Psoas muscle (tissue), 8 donors: ENCODE measurements at regions of chr5 and their contacts with region 1.

Region 1: GRCh38 chr5:140372971-140373487 is 13.0 kb downstream of the SLC4A9 start:
- DNase-seq: peak; percentile 75 to 83
- ATAC-seq: peak; percentile 80 to 93 (median 86)
- H3K4me3 ChIP-seq: no peak overlapping the region
- H3K27ac ChIP-seq: no peak overlapping the region
- H3K4me1 ChIP-seq: no peaks in the 10 kb centered on the region
- H3K27me3 ChIP-seq: no peaks in the 10 kb centered on the region
- CTCF ChIP-seq: peak; percentile 83

Region 2: GRCh38 chr5:139104577-139105276 is 1268.3 kb before region 1 on chr5:
- intact Hi-C with region 1: no loop called
- DNase-seq: peak; percentile 71 to 83
- ATAC-seq: peak; percentile 90 to 91 (median 90)
- H3K4me3 ChIP-seq: peak overlapping the region; percentile 48
- H3K27ac ChIP-seq: peak overlapping the region; percentile 73
- H3K4me1 ChIP-seq: peaks cover 42% of the 10 kb centered on the region
- H3K27me3 ChIP-seq: no peaks in the 10 kb centered on the region
- CTCF ChIP-seq: no peak

Region 3: GRCh38 chr5:140408750-140409256 is 35.8 kb after region 1 on chr5:
- intact Hi-C with region 1: no loop called
- DNase-seq: no peak
- ATAC-seq: peak; percentile 18 to 68 (median 50)
- H3K4me3 ChIP-seq: no peak overlapping the region
- H3K27ac ChIP-seq: peak overlapping the region; percentile 46
- H3K4me1 ChIP-seq: peaks cover 26% of the 10 kb centered on the region
- H3K27me3 ChIP-seq: no peaks in the 10 kb centered on the region
- CTCF ChIP-seq: no peak

Region 4: GRCh38 chr5:140432916-140433315 is 59.9 kb after region 1 on chr5:
- intact Hi-C with region 1: no loop called
- DNase-seq: no peak
- ATAC-seq: peak in 2 of 4 donors; percentile 77 to 80
- H3K4me3 ChIP-seq: no peak overlapping the region
- H3K27ac ChIP-seq: peak overlapping the region; percentile 30
- H3K4me1 ChIP-seq: peaks cover 12% of the 10 kb centered on the region
- H3K27me3 ChIP-seq: no peaks in the 10 kb centered on the region
- CTCF ChIP-seq: no peak

Region 5: GRCh38 chr5:140639148-140639979 is 266.3 kb after region 1 on chr5 and contains the start of gene TMCO6:
- intact Hi-C with region 1: loop called in 1 of 2 experiments (anchors 5 kb)
- DNase-seq: peak; percentile 99
- ATAC-seq: peak; percentile 99
- H3K4me3 ChIP-seq: peak within 1 kb of the TSS; percentile 82
- H3K27ac ChIP-seq: peak within 1 kb of the TSS; percentile 90
- H3K4me1 ChIP-seq: peaks cover 7% of the 10 kb centered on the region
- H3K27me3 ChIP-seq: no peaks in the 10 kb centered on the region
- CTCF ChIP-seq: peak; percentile 66
- total RNA-seq, gene TMCO6: 3.6 to 4.9 (median 4.1) TPM

Region 6: GRCh38 chr5:140658870-140659269 is 285.8 kb after region 1 on chr5:
- intact Hi-C with region 1: no loop called
- DNase-seq: no peak
- ATAC-seq: no peak
- H3K4me3 ChIP-seq: no peak overlapping the region
- H3K27ac ChIP-seq: no peak overlapping the region
- H3K4me1 ChIP-seq: peaks cover 4% of the 10 kb centered on the region
- H3K27me3 ChIP-seq: no peaks in the 10 kb centered on the region
- CTCF ChIP-seq: no peak

Region 7: DNA sequence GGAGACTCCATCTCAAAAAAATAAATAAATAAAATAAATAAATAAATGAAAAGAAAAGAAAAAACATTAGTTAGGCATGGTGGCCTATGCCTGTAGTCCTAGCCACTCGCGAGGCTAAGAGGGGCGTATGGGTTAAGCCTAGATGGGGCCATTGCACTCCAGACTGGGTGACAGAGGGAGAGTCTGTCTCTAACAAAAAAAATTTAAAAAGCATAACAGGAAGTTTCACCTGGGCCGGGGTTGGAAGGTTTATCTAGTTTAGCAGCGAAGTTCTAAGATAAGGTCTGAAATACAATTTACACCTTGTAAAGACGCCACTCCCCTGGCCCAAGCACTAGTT is 345.2 kb after region 1 on chr5:
- intact Hi-C with region 1: loop called in 1 of 2 experiments (anchors 5 kb)
- DNase-seq: no peak
- ATAC-seq: no peak
- H3K4me3 ChIP-seq: no peak overlapping the region
- H3K27ac ChIP-seq: no peak overlapping the region
- H3K4me1 ChIP-seq: no peaks in the 10 kb centered on the region
- H3K27me3 ChIP-seq: peaks cover 0 to 3% (median 3%) of the 10 kb centered on the region in 3 donors
- CTCF ChIP-seq: no peak

Region 8: GRCh38 chr5:140734354-140734753 is 361.3 kb after region 1 on chr5:
- intact Hi-C with region 1: loop called (anchors 5 kb)
- DNase-seq: no peak
- ATAC-seq: peak; percentile 67 to 84 (median 78)
- H3K4me3 ChIP-seq: no peak overlapping the region
- H3K27ac ChIP-seq: no peak overlapping the region
- H3K4me1 ChIP-seq: no peaks in the 10 kb centered on the region
- H3K27me3 ChIP-seq: peaks cover 0 to 6% (median 3%) of the 10 kb centered on the region in 3 donors
- CTCF ChIP-seq: peak; percentile 59

Region 9: DNA sequence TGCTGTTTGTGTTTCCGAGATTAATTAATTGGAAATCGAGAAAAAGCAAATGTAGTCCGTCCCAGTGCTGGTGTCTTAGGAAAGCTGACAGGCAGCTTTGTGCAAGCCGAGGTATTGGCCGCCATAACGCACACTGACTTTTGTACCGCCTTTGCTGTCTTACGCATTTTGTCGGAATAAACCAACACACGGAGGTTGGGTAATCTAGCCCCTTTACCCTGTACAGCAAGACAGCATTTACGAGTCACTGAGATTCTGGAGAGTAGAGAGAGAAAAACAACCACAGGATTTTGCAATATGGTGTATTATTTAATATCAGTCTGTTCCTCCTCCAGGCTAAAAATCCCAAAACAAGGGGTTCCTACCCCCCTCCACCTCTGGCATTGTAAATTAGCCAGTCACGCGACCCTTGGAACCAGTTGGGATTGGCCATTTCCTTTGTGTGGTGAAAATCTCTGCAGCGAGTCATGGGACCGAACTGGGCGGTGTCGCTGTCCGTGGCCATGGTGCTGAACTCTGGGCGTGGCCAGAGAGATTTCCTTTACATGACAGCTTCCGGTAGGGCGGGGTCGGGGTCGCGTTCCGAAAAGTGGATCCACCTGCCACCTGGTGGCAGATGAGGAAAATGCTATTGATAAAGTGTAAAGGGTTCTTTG is 667.9 kb after region 1 on chr5:
- intact Hi-C with region 1: loop called in 1 of 2 experiments (anchors 10 kb)
- DNase-seq: peak; percentile 87 to 91
- ATAC-seq: peak; percentile 89 to 95 (median 92)
- H3K4me3 ChIP-seq: peak overlapping the region; percentile 54
- H3K27ac ChIP-seq: no peak overlapping the region
- H3K4me1 ChIP-seq: no peaks in the 10 kb centered on the region
- H3K27me3 ChIP-seq: no peaks in the 10 kb centered on the region
- CTCF ChIP-seq: peak; percentile 51